PC-9 (cell line): ENCODE measurements at regions of chr14 and their contacts with region 1.

Region 1: DNA sequence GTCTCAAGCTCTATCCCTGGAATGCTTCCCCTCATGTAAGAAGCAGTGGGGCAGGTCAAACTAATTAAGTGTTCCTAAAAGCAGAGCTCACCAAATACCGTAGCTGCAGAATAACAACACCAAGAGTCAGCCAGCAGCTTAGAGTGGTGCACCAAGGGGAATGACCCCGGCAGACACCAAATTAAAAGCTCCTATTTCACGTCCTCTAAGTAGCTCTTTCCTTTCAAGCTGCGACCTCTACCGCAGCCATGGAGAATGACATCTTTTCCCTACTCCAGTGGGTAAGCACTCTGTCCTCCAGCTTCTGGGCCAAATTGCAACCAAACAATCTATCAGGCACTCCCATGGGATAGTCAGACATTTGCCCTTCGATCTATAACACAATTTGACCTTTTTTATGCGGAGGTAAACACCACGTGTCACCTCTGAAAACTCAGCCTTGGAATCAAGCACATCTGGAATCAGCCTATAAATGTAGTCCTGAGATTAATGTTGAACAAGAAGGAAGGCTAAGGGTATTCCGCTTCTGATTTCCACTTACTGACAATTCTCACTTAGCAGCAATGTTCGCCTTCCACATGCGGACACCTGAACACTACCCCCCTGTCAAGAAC is 67.6 kb upstream of the CDKN3 start:
- DNase-seq: peak; percentile 39 to 47
- H3K4me3 ChIP-seq: no peak overlapping the region
- H3K27ac ChIP-seq: no peak overlapping the region
- H3K4me1 ChIP-seq: no peaks in the 10 kb centered on the region
- H3K27me3 ChIP-seq: no peaks in the 10 kb centered on the region
- CTCF ChIP-seq: peak; percentile 49

Region 2: GRCh38 chr14:54291491-54292191 is 37.5 kb before region 1 on chr14:
- CTCF ChIA-PET with region 1: no interaction called
- POLR2A ChIA-PET with region 1: interaction called, 14 read pairs
- intact Hi-C with region 1: no loop called
- DNase-seq: no peak
- H3K4me3 ChIP-seq: no peak overlapping the region
- H3K27ac ChIP-seq: no peak overlapping the region
- H3K4me1 ChIP-seq: peaks cover 5% of the 10 kb centered on the region; the same call in 1 of the 2 replicates
- H3K27me3 ChIP-seq: no peaks in the 10 kb centered on the region
- CTCF ChIP-seq: no peak